Activated CD8-positive, alpha-beta T cell treated with anti-CD3 and anti-CD28 coated beads for 36 hours (primary cell): ENCODE measurements at regions of chr3 and their contacts with region 1.

Region 1: GRCh38 chr3:129052675-129053074 is 7.9 kb upstream of the GP9 start:
- DNase-seq: no peak
- ATAC-seq: no peak
- H3K4me3 Mint-ChIP-seq: no peak overlapping the region
- H3K27ac Mint-ChIP-seq: no peak overlapping the region
- H3K4me1 Mint-ChIP-seq: peaks cover 7% of the 10 kb centered on the region
- H3K27me3 Mint-ChIP-seq: no peaks in the 10 kb centered on the region
- CTCF ChIP-seq: no peak

Region 2: GRCh38 chr3:129003578-129004160 is 49.0 kb before region 1 on chr3:
- CTCF ChIA-PET with region 1: interaction called, 12 read pairs
- POLR2A ChIA-PET with region 1: no interaction called
- intact Hi-C with region 1: no loop called
- DNase-seq: peak; percentile 63
- ATAC-seq: peak; percentile 71
- H3K4me3 Mint-ChIP-seq: peak overlapping the region; percentile 71
- H3K27ac Mint-ChIP-seq: no peak overlapping the region
- H3K4me1 Mint-ChIP-seq: peaks cover 33% of the 10 kb centered on the region
- H3K27me3 Mint-ChIP-seq: peaks cover 20% of the 10 kb centered on the region
- CTCF ChIP-seq: no peak

Region 3: DNA sequence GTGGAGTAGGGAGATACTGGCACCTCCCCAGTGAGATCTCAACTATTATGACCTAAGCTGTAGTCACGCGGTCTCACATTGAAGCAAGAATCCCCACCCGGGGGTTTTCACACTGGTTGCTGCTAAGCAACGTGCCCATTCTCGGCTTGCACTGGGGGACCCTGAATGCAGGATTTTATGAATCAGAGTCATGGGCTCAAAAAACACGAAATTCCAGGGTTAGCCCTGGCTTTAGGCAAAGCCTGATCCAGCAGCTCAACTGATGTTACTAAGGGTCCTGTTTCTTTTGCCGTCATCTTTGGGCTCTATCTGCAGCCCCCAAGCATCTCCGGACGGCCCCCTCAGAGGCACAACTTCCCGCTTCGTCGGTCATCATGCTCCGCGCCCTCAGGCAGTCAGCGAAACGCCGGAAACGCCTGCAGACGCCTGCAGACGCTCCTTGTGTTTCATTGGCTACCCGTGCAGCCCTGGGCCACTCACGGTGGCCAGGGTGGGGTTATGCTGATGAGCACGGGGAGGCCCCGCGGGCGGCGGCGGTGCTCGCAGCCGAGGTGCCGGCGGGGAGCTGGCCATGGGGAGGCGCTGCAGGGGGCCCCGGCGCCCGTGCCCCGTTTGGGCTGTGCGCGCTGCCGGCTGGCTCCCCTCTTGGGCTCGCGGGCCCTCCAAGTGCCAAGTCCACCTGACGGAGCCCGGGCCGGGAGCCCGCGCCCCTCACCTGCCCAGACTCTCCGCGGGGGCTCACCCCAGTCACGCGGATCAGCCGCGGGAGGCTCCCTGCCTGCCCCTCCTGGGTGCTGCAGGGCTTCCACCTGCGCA is 25.7 kb before region 1 on chr3:
- CTCF ChIA-PET with region 1: interaction called, 33 read pairs
- POLR2A ChIA-PET with region 1: interaction called, 3 read pairs
- intact Hi-C with region 1: no loop called
- DNase-seq: peak; percentile 96
- ATAC-seq: peak; percentile 99
- H3K4me3 Mint-ChIP-seq: peak overlapping the region; percentile 73
- H3K27ac Mint-ChIP-seq: peak overlapping the region; percentile 91
- H3K4me1 Mint-ChIP-seq: peaks cover 22% of the 10 kb centered on the region
- H3K27me3 Mint-ChIP-seq: no peaks in the 10 kb centered on the region
- CTCF ChIP-seq: peak; percentile 94

Region 4: GRCh38 chr3:129068291-129068886 is 15.7 kb after region 1 on chr3:
- CTCF ChIA-PET with region 1: interaction called, 103 read pairs
- POLR2A ChIA-PET with region 1: interaction called, 6 read pairs
- intact Hi-C with region 1: no loop called
- DNase-seq: peak; percentile 26
- ATAC-seq: peak; percentile 52
- H3K4me3 Mint-ChIP-seq: peak overlapping the region; percentile 61
- H3K27ac Mint-ChIP-seq: no peak overlapping the region
- H3K4me1 Mint-ChIP-seq: peaks cover 11% of the 10 kb centered on the region
- H3K27me3 Mint-ChIP-seq: no peaks in the 10 kb centered on the region
- CTCF ChIP-seq: no peak

Region 5: GRCh38 chr3:129101370-129102138 is 48.9 kb after region 1 on chr3:
- CTCF ChIA-PET with region 1: interaction called, 20 read pairs
- POLR2A ChIA-PET with region 1: interaction called, 4 read pairs
- intact Hi-C with region 1: no loop called
- DNase-seq: no peak
- ATAC-seq: no peak
- H3K4me3 Mint-ChIP-seq: no peak overlapping the region
- H3K27ac Mint-ChIP-seq: peak overlapping the region; percentile 65
- H3K4me1 Mint-ChIP-seq: peaks cover 70% of the 10 kb centered on the region
- H3K27me3 Mint-ChIP-seq: no peaks in the 10 kb centered on the region
- CTCF ChIP-seq: no peak

Region 6: GRCh38 chr3:129160891-129161859 is 108.5 kb after region 1 on chr3 and contains the start of gene ISY1:
- CTCF ChIA-PET with region 1: interaction called, 37 read pairs
- POLR2A ChIA-PET with region 1: interaction called, 5 read pairs
- intact Hi-C with region 1: no loop called
- DNase-seq: peak; percentile 91
- ATAC-seq: peak; percentile 82
- H3K4me3 Mint-ChIP-seq: peak within 1 kb of the TSS; percentile 88
- H3K27ac Mint-ChIP-seq: peak within 1 kb of the TSS; percentile 98
- H3K4me1 Mint-ChIP-seq: peaks cover 27% of the 10 kb centered on the region
- H3K27me3 Mint-ChIP-seq: no peaks in the 10 kb centered on the region
- CTCF ChIP-seq: peak; percentile 84
- total RNA-seq, gene ISY1: 66.7 to 68.5 TPM